Activated T-helper 1 cell treated with anti-CD3 and anti-CD28 coated beads, Interleukin-12 subunit alpha, Interleukin-12 subunit beta, Interleukin-2, Interleukin-4 antibody, amounts not matched to agents 30 ng/mL and 10 ng/mL and 1 ng/mL, durations not matched to agents 14 hours and 24 hours and 36 hours (primary cell): ENCODE measurements at regions of chr3 and their contacts with region 1.

Region 1: DNA sequence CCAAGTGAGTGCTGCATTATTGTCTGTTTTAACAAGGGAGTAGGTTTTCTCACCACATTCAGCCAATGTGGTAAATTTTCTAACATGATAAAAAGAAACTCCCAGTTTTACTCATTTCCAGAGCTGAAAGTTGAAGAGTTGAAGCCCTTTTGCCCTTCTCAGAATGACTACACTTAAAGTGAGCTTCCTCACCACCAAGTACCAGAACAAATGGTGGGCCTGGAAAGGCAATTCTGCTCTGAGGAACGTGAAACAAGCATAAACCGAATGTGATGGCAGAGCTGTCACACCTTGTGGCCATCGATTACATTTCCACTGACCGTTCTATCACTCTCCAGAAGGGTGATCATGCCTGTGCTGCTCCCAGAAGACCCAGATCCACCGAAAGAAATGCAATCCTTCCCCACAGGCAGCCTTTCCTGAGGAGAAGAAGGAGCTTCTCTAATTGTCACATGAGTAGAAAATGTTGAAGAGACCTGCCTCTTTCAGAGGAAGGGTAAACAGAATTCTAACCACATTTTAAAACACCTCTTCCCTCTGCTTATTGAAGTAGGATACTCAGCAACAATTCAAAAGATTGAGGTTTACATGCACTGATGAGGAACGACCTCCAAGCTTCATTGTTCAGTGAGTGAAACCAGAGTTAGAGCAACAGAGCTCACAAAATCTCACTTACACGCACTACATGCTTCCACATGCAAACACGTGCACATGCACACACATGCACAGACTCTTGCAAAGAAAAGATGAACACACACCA is 21.4 kb upstream of the CCR9 start:
- DNase-seq: peak; percentile 41
- H3K4me3 Mint-ChIP-seq: peak overlapping the region; percentile 55
- H3K27ac Mint-ChIP-seq: peak overlapping the region; percentile 42
- H3K4me1 Mint-ChIP-seq: peaks cover 53% of the 10 kb centered on the region
- H3K27me3 Mint-ChIP-seq: peaks cover 31% of the 10 kb centered on the region

Region 2: DNA sequence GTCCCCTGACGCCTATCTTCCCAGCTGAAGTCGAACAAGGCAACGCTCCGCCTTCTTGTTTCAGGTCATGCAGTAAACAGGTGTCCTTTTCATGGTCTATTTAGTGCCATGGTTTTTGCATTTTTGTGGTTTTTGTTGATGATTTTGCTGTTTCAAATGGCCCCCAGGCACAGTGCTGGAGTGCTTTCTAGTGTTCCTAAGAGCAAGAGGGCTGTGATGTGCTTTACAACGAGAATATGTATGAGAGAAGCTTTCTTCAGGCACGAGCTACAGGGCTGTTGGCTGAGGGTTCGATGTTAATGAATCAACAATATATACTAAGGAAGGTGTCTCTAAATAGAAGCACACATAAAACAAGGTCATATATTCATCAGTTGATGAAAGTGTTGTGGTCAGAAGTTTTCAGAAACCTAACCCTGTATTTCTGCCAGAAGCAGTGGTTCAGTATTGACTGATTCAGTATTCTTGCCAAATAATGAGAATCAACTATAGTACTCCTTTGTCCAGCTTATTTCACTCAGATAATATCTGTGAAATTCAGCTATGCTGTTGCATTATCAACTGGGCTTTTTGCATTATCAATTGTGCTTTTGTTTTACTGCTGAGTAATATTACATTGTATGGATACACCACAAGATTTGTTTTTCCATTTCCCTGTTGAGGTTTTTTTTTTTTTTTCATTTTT is 251.9 kb before region 1 on chr3:
- intact Hi-C with region 1: loop called (anchors 2 kb)
- DNase-seq: no peak
- H3K4me3 Mint-ChIP-seq: no peak overlapping the region
- H3K27ac Mint-ChIP-seq: peak overlapping the region; percentile 42
- H3K4me1 Mint-ChIP-seq: peaks cover 51% of the 10 kb centered on the region
- H3K27me3 Mint-ChIP-seq: no peaks in the 10 kb centered on the region

Region 3: GRCh38 chr3:45841757-45842491 is 23.0 kb before region 1 on chr3 and contains the start of gene LZTFL1:
- intact Hi-C with region 1: loop called (anchors 1 kb)
- DNase-seq: peak; percentile 81
- H3K4me3 Mint-ChIP-seq: peak within 1 kb of the TSS; percentile 90
- H3K27ac Mint-ChIP-seq: peak within 1 kb of the TSS; percentile 77
- H3K4me1 Mint-ChIP-seq: peaks cover 22% of the 10 kb centered on the region
- H3K27me3 Mint-ChIP-seq: peaks cover 26% of the 10 kb centered on the region
- total RNA-seq, gene LZTFL1: 5.2 and 6.5 TPM in 2 replicates

Region 4: GRCh38 chr3:45915518-45916231 is 50.7 kb after region 1 on chr3:
- intact Hi-C with region 1: loop called (anchors 1 kb)
- DNase-seq: peak; percentile 65
- H3K4me3 Mint-ChIP-seq: peak overlapping the region; percentile 58
- H3K27ac Mint-ChIP-seq: peak overlapping the region; percentile 83
- H3K4me1 Mint-ChIP-seq: peaks cover 33% of the 10 kb centered on the region
- H3K27me3 Mint-ChIP-seq: peaks cover 30% of the 10 kb centered on the region

Region 5: GRCh38 chr3:45995236-45996192 is 130.6 kb after region 1 on chr3 and contains the start of gene FYCO1:
- intact Hi-C with region 1: loop called (anchors 5 kb)
- DNase-seq: peak; percentile 82
- H3K4me3 Mint-ChIP-seq: peak within 1 kb of the TSS; percentile 87
- H3K27ac Mint-ChIP-seq: peak within 1 kb of the TSS; percentile 96
- H3K4me1 Mint-ChIP-seq: peaks cover 64% of the 10 kb centered on the region
- H3K27me3 Mint-ChIP-seq: peaks cover 3% of the 10 kb centered on the region
- total RNA-seq, gene FYCO1: 16.1 and 16.3 TPM in 2 replicates

Region 6: GRCh38 chr3:46070595-46071093 is 205.7 kb after region 1 on chr3:
- intact Hi-C with region 1: loop called (anchors 1 kb)
- DNase-seq: no peak
- H3K4me3 Mint-ChIP-seq: peak overlapping the region; percentile 53
- H3K27ac Mint-ChIP-seq: peak overlapping the region; percentile 96
- H3K4me1 Mint-ChIP-seq: peaks cover 70% of the 10 kb centered on the region
- H3K27me3 Mint-ChIP-seq: peaks cover 12% of the 10 kb centered on the region

Region 7: DNA sequence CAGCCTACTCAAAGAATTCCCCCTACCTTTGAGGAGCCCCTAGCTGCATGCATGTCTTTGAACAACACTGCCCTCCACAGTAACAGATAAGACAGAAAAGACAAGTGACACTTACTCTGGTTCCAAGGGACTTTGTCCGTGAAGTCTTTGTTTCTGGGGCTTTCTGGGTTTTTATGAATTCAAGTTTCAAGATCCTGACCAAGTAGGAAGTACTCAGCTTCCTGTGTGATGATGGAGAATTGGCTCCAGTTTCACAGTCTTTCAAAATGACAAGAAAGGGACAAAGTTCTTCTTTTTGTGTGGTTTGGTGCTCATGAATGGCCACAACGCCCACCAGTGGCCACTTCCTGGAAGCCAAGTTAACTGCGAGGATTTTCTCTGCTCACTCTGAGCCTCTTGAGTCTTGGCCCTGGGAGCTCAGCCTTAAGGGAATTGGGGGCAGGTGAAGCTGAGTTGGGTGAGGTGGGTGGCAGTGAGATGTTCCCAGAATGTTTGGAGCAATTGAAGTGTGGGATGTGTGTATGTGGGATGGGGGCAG is 343.3 kb after region 1 on chr3 and contains the start of gene CCR1:
- intact Hi-C with region 1: no loop called
- DNase-seq: peak; percentile 58
- H3K4me3 Mint-ChIP-seq: peak within 1 kb of the TSS; percentile 78
- H3K27ac Mint-ChIP-seq: peak within 1 kb of the TSS; percentile 91
- H3K4me1 Mint-ChIP-seq: peaks cover 70% of the 10 kb centered on the region
- H3K27me3 Mint-ChIP-seq: no peaks in the 10 kb centered on the region
- total RNA-seq, gene CCR1: 22.6 and 23.2 TPM in 2 replicates